AG04450 (cell line): ENCODE measurements at regions of chr2 and their contacts with region 1.

Region 1: GRCh38 chr2:160324161-160324800 is 124.2 kb upstream of the ITGB6 start:
- DNase-seq: no peak
- H3K4me3 ChIP-seq: no peak overlapping the region
- H3K27ac ChIP-seq: no peak overlapping the region
- H3K27me3 ChIP-seq: no peaks in the 10 kb centered on the region
- CTCF ChIP-seq: peak; percentile 78

Region 2: DNA sequence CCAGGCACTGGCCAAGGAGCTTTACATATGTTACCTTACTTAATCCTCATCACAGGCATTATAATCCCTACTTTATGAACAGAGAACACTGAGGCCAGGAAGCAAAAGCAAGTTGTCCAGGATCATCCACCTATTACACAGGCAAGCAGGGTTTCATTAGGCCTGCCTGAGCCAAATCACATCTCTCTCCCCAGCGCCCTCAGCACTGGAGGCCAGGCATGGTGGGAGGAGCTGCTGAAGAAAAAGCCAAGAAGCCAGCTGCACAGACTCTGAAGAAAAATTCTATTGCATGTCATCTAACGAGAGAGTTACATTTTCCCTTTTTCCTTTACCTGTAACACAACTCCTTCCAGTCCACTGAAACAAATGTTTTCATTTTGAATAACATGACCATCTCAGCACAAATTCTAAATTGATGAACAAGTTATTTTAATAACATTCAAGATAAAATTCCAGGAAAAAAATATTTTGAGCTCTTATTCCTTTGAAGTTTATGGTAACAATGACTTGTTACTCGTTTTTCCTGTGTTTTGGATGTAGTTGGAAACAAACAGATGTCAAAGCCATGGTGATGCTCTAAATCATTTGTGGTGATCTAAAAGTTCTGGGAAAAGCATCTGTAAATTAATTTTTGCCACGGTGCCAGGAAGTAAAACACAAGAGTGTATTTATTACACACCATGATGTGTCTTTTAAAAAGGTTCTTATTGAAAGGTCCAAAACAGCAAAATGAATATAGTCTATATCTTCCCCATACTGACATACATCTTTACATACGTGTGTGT is 14.8 kb after region 1 on chr2:
- CTCF ChIA-PET with region 1: interaction called, 53 read pairs
- POLR2A ChIA-PET with region 1: interaction called, 3 read pairs
- DNase-seq: no peak
- H3K4me3 ChIP-seq: no peak overlapping the region
- H3K27ac ChIP-seq: no peak overlapping the region
- H3K27me3 ChIP-seq: no peaks in the 10 kb centered on the region
- CTCF ChIP-seq: no peak

Region 3: GRCh38 chr2:160353166-160353565 is 28.9 kb after region 1 on chr2:
- CTCF ChIA-PET with region 1: interaction called, 12 read pairs
- POLR2A ChIA-PET with region 1: no interaction called
- DNase-seq: no peak
- H3K4me3 ChIP-seq: no peak overlapping the region
- H3K27ac ChIP-seq: no peak overlapping the region
- H3K27me3 ChIP-seq: no peaks in the 10 kb centered on the region
- CTCF ChIP-seq: no peak